HepG2 (cell line): ENCODE measurements at regions of chr6 and their contacts with region 1.

Region 1: GRCh38 chr6:44192428-44193041 is 24.2 kb upstream of the MYMX start:
- DNase-seq: no peak
- ATAC-seq: peak; percentile 82
- H3K4me3 ChIP-seq: peak overlapping the region; percentile 44 to 70 (median 63)
- H3K27ac ChIP-seq: no peak overlapping the region
- H3K4me1 ChIP-seq: peaks cover 58% of the 10 kb centered on the region
- H3K27me3 ChIP-seq: peaks cover 0 to 5% of the 10 kb centered on the region in 2 experiments; a peak in 2 of 5 replicates
- CTCF ChIP-seq: peak; percentile 6; the same call in 1 of the 2 replicates
- EP300 ChIP-seq: no peak
- POLR2A ChIP-seq: peak in 1 of 2 experiments; percentile 46; a peak in 1 of 4 replicates
- RAD21 ChIP-seq: no peak

Region 2: DNA sequence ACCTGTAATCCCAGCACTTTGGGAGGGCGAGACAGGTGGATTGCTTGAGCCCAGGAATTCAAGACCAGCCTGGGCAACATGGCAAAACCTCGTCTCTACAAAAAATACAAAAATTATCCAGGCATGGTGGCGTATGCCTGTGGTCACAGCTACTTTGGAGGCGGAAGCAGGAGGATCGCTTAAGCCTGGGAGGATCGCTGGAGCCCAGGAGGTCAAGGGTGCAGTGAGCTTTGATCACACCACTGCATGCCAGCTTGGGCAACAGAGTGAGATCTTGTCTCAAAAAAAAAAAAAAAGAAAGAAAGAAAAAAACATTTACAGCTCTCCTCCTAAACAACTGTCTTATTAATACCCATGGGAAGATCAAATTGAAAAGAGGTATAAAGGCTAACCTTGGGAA is 15.4 kb after region 1 on chr6:
- CTCF ChIA-PET with region 1: no interaction called
- POLR2A ChIA-PET with region 1: interaction called, 15 read pairs
- in situ Hi-C with region 1: no loop called
- intact Hi-C with region 1: no loop called
- DNase-seq: no peak
- ATAC-seq: peak; percentile 69
- H3K4me3 ChIP-seq: no peak overlapping the region; a peak in 1 of 6 replicates
- H3K27ac ChIP-seq: no peak overlapping the region
- H3K4me1 ChIP-seq: peaks cover 57% of the 10 kb centered on the region
- H3K27me3 ChIP-seq: peaks cover 0 to 3% of the 10 kb centered on the region in 2 experiments; a peak in 1 of 5 replicates
- CTCF ChIP-seq: no peak
- EP300 ChIP-seq: no peak
- POLR2A ChIP-seq: no peak
- RAD21 ChIP-seq: no peak